Right ventricle myocardium inferior (tissue), 1 donor: ENCODE measurements at regions of chr18 and their contacts with region 1.

Region 1: DNA sequence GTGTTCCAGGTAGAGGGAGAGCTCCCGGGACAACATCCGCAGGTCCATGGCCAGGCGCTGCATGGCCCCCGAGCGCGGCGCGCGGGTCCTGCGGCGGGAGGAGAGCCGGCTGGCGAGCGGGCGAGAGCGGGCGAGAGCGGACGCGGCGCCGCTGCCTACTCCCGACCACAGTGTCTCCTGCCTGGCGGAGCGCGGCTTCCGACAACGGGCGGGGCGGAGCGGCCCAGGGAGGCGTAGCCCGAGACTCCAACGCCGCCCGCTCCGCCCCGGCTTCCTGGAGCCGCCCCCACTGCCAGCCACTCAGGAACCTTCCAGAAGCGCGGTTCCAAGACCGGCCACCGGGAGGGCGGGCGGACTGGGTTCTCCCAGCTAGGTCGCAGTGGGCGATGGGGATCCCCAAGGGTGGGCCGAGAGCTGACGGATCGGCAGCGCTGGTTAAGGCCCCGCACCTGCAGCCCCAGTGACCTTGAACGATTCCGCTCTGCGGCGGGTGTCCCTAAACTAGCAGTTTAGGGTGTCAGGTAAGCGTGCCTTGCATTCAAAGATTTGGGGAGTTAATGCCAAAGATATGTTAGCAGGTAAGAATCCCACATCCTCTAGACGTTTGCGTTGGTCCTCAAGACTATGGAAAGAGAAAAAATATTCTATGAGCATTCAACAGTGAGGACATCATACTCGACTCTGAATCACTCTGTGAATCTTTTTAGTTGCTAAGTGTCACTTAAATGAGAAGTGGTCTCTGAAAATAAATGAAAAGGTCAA is at the start of gene ABHD3:
- DNase-seq: peak; percentile 97
- ATAC-seq: peak; percentile 100
- total RNA-seq, gene ABHD3: 5.4 TPM

Region 2: DNA sequence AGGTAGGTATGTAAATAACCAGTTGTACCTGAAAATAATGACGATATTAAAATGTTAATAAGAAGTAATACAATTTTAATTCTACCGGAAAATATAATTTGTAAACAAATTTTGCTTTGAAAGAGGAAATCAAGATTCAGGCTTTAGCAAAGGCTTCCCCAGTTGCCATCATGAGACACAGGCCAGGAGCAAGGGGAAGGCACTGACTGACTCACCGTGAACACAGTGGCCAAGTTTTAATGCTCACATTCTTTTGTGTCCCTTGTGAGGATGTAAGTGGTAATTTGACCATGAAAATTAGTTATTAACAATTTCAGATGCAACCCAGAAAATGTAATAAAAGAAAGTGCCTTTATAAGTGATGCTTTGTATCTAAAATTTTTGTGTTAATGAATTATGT is 298.7 kb before region 1 on chr18:
- intact Hi-C with region 1: no loop called
- DNase-seq: no peak
- ATAC-seq: no peak

Region 3: GRCh38 chr18:21740724-21741510 is 36.1 kb after region 1 on chr18 and contains the start of gene MIB1:
- intact Hi-C with region 1: loop called (anchors 2 kb)
- DNase-seq: peak; percentile 76
- ATAC-seq: peak; percentile 87
- total RNA-seq, gene MIB1: 17.3 TPM